K562 (cell line): ENCODE measurements at regions of chr18 and their contacts with region 1.

Region 1: DNA sequence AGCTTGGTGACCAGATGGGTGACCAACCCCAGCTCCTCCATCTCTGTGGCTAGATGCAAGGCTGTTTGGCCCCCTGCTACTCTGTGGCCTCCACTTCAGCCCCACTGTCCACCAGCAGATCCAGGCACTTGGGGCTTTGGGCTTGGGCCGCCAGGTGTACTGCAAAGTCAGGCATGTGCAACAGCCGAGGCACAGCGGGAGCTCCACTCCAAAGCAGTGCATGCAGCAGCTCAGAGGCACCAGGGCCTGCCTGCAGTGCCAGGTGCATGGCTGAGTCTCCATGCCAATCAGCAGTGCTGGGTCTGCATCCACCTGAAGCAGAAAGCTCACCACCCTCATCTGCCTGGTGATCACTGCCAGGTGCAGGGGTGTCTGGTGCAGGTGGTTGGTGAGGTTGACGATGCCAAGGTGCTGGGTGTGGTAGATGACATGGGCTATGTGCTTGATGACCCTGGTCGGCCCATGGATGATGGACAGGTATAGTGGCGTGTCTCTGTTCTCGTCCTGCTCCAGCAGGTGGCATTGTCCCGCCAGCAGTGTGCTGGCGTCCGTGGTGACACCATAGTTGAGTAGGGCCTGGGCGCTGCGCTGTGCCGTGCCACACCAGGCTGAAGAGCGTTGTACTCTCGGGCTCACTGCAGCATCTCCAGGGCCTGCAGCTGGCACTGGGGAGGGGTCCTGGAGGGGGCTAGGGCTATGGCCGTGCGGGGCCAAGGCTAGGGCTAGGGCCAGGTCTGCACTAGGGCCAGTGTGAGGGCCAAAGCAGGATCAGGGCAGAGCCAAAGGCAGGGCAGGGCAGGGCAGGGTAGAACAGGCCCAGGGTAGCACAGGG is 1.0 kb upstream of the ANKRD62 start:
- DNase-seq: peak; percentile 25 to 72 (median 44)
- ATAC-seq: peak; percentile 97
- H3K4me3 ChIP-seq: no peak overlapping the region
- H3K27ac ChIP-seq: no peak overlapping the region
- H3K4me1 ChIP-seq: peaks cover 0 to 7% of the 10 kb centered on the region in 2 experiments; a peak in 2 of 5 replicates
- H3K27me3 ChIP-seq: no peaks in the 10 kb centered on the region; a peak in 1 of 5 replicates
- CTCF ChIP-seq: peak; percentile 76 to 88 (median 83)
- EP300 ChIP-seq: no peak
- POLR2A ChIP-seq: no peak
- RAD21 ChIP-seq: peak; percentile 85 to 93

Region 2: DNA sequence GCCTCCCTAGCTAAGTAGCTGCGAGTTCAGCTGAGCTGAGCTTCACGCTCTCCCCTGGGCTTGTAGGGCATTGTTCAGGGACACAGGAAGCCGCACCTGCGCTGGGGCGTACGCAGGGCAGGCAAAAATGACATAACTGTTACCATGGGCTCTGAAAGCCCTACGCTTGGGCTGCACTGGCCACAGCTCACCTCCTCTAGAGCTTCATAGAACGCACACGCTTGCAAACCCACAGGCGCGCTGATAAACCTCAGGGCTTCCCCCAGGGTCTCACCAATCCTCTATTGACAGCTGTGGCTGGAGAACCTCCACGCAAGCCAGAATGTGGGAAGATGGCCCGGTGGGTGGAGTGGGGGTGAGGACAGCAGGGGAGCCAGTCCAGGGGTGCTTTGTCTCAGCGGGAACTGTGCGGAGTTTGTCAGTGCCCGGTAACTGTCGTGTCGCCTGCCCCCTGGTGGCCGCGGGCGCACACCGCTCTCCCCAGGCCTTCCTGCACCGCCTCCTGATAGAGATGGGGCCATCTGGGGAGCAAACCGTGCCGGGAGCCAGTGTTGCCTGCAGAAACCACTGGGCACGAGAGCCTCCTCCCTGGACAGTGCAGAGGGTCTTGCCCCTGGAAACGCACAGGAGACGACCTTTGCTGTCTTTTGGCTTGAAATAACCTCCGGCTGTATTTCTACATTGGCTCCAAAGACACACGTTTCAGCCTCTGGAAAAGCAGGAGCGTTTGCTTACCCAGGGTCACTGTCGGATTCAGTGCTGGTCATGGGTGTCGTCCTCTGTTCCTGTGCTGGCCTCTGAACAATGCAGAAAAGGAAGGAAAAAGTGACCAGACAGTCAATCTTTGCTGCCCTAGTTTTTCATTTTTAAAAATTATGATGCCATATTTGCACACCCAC is 144.6 kb after region 1 on chr18:
- CTCF ChIA-PET with region 1: interaction called, 5 read pairs
- POLR2A ChIA-PET with region 1: no interaction called
- in situ Hi-C with region 1: loop called (anchors 5 kb)
- intact Hi-C with region 1: loop called (anchors 2 kb)
- DNase-seq: peak; percentile 76 to 85 (median 82)
- ATAC-seq: peak; percentile 99
- H3K4me3 ChIP-seq: no peak overlapping the region; the same call in 1 of the 2 replicates
- H3K27ac ChIP-seq: no peak overlapping the region
- H3K4me1 ChIP-seq: peaks cover 19 to 22% of the 10 kb centered on the region in 2 experiments
- H3K27me3 ChIP-seq: peaks cover 17 to 18% of the 10 kb centered on the region in 2 experiments
- CTCF ChIP-seq: peak; percentile 89 to 96 (median 91)
- EP300 ChIP-seq: no peak
- POLR2A ChIP-seq: no peak
- RAD21 ChIP-seq: peak; percentile 83 to 92

Region 3: DNA sequence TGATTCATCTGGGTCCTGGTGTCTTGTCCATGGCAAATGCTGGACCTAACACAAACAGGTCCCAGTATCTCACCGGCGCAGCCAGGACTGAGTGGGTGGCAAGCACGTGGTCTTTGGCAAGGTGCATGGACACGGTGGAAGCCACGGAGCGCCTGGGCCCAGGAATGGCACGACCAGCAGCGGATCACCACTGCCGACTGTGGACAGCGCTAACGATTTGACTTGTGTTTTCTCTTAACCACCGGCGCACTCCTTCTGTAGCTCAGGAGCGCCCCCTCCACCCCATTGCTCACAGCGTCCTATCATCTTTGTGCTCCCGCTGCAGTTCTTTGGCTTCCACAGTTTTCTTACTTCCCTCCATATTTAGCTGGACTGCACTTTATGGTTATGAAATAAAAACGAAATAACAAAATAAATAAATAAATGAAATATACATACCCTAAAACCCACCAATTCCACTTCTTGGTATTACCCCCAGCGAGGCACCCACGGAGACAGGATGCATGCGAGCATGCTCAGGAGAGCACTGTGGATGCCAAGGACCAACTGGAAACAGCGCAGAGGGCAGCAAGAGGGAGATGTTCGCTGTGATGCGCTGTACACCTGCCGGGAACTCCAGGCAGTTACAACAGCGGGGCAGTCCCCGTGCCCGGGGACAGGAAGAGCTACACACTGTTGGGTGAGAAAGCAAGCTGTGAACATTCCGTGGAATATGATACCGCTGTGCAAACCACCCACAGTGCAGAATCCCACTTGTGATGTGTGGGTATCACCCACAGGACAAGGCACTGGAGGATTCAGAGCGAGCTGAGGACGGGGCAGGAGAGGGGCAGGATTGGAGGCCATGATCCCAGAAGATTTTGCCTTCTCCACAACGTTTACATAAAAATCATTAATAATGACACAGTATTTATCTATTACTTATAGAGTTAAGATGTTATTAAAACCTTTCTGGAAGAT is 154.5 kb after region 1 on chr18:
- CTCF ChIA-PET with region 1: interaction called, 11 read pairs
- POLR2A ChIA-PET with region 1: interaction called, 3 read pairs
- in situ Hi-C with region 1: no loop called
- intact Hi-C with region 1: no loop called
- DNase-seq: peak; percentile 62 to 78 (median 67)
- ATAC-seq: peak; percentile 97
- H3K4me3 ChIP-seq: no peak overlapping the region
- H3K27ac ChIP-seq: no peak overlapping the region
- H3K4me1 ChIP-seq: peaks cover 0 to 10% of the 10 kb centered on the region in 2 experiments; a peak in 2 of 5 replicates
- H3K27me3 ChIP-seq: peaks cover 44 to 64% of the 10 kb centered on the region in 2 experiments
- CTCF ChIP-seq: peak; percentile 84 to 90 (median 86)
- EP300 ChIP-seq: no peak
- POLR2A ChIP-seq: no peak
- RAD21 ChIP-seq: peak; percentile 70 to 82